ENCODE measurements at regions of chr18 and their contacts with region 1.

Region 1: DNA sequence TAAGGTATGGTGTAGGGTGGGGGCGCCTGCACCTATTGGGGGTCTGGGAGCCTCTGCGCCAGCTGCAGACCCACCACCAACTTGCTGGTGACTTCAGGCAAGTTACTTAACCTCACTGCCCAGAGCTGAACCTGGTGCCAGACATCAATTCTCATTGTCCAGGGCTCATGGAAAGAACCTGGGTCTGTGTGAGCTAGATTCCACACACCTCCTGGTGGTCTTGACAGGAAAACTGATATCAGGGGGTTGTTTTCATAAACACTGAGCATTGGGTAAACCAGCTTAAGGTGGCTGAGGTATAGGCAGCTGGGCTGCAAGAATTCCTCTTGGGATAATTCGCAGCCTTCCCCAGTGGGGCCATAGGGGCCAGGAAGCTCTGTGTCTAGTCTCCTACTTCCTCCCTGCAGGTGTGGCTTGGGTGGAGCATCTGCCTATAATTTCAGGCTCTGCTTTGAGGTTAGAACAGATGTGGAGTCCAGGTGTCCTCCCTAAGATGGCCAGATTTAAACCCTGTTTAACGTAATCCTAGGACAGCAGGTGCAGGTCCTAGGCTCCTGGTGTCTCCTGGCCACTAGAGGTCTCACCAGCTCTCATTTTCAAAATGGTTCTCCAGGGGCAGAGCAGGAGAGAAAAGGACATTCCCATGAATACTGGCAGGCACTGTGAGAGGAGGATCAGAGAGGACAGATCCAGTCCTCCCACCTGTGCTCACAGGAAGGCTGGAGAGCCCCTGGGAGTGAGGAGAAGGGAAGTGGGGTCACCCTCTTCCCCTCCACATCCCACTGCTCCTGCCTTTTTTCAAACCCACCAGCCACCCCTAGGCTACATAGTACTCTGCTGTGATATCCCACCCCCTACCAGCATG is 100.4 kb upstream of the SMAD2 start:
- DNase-seq: peak; percentile 35
- H3K4me3 ChIP-seq: no peak overlapping the region
- H3K27ac ChIP-seq: no peak overlapping the region
- H3K4me1 ChIP-seq: no peaks in the 10 kb centered on the region
- H3K27me3 ChIP-seq: no peaks in the 10 kb centered on the region
- CTCF ChIP-seq: peak; percentile 66 to 72
- POLR2A ChIP-seq: no peak

Region 2: DNA sequence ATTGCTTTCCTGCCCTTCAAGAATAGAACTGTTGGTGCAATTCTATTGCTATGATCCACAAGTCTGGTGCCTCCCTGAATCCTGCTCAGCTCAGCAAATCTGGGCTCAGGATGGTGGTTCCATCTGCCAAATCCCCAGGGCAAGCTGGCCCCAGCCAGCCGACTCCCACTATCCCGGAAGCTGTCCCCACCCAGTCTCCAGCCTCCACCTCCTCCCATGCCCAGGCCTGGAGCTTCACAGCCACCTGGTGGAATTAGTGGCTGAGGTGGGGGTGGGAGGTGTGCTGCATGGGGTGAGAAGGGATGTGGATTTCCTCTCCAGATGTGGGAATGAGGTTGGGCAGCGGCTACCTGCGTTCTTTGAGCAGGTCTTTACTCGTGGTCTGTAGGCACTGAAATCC is 18.9 kb after region 1 on chr18:
- CTCF ChIA-PET with region 1: interaction called, 13 read pairs
- POLR2A ChIA-PET with region 1: no interaction called
- dilution Hi-C with region 1: no loop called
- intact Hi-C with region 1: no loop called
- DNase-seq: no peak
- H3K4me3 ChIP-seq: no peak overlapping the region
- H3K27ac ChIP-seq: no peak overlapping the region
- H3K4me1 ChIP-seq: no peaks in the 10 kb centered on the region
- H3K27me3 ChIP-seq: peaks cover 0 to 5% of the 10 kb centered on the region in 2 experiments
- CTCF ChIP-seq: no peak
- POLR2A ChIP-seq: no peak

Region 3: DNA sequence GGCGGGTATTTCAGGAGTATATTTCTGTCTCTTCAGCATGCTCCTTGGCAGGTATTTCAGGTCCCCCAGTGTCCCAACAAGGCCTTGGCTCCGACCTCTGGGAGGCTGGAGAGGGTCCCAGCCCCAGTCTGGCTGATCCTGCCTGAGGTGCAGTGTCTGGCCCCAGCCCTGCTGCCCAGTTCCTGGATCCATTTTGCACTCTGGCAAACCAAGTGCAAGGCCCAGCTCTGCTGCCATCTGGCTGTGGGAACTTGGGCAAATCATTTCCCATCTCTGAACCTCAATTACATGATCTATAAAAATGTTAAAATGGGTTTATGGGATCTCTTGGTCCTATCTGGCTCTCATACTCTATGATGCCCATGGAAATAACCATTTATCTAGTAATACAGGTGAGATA is 314.7 kb after region 1 on chr18:
- CTCF ChIA-PET with region 1: interaction called, 10 read pairs
- POLR2A ChIA-PET with region 1: no interaction called
- dilution Hi-C with region 1: no loop called
- intact Hi-C with region 1: no loop called
- DNase-seq: no peak
- H3K4me3 ChIP-seq: no peak overlapping the region
- H3K27ac ChIP-seq: no peak overlapping the region
- H3K4me1 ChIP-seq: no peaks in the 10 kb centered on the region
- H3K27me3 ChIP-seq: no peaks in the 10 kb centered on the region
- CTCF ChIP-seq: peak in 1 of 2 donors; percentile 3
- POLR2A ChIP-seq: no peak

Region 4: GRCh38 chr18:48470484-48471180 is 439.8 kb after region 1 on chr18:
- CTCF ChIA-PET with region 1: no interaction called
- POLR2A ChIA-PET with region 1: no interaction called
- dilution Hi-C with region 1: no loop called
- intact Hi-C with region 1: loop called (anchors 1 kb)
- DNase-seq: no peak
- H3K4me3 ChIP-seq: no peak overlapping the region
- H3K27ac ChIP-seq: no peak overlapping the region
- H3K4me1 ChIP-seq: no peaks in the 10 kb centered on the region
- H3K27me3 ChIP-seq: peaks cover 12 to 29% of the 10 kb centered on the region in 2 experiments
- CTCF ChIP-seq: no peak
- POLR2A ChIP-seq: no peak

Measured in endothelial cell of umbilical vein (primary cell).